Activated B cell treated with CpG ODN at 0.5 μM for 24 hours (primary cell): ENCODE measurements at regions of chr13 and their contacts with region 1.

Region 1: DNA sequence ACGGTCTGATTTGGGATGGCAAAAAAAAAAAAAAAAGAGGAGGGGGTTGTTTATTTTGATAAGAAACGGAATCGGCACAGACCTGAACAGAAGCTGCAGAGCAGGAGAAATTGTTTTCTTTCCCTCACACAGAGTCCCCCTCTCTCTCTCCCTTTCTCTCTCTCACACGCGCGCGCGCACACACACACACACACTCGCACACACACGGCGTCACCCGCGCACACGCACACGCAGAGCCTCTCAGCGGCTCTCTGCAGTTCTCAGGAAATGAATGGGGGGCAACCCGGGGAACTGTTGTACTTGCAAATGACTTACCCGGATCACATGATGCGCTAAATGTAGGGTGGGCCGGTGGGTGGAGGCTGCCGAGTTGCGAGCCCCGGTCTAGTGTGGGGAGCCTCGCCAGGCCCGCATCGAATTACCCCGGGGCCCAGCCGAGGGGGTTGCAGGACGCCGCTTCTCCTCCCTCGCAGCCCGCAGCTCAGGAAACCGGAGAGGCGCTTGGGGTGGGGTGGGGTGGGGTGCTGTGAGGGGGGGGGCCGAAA is 475 bp downstream of the KLF12 start:
- DNase-seq: peak; percentile 79
- ATAC-seq: peak; percentile 51
- H3K4me3 Mint-ChIP-seq: no peak overlapping the region
- H3K27ac Mint-ChIP-seq: peak overlapping the region; percentile 98
- H3K4me1 Mint-ChIP-seq: peaks cover 39% of the 10 kb centered on the region
- H3K27me3 Mint-ChIP-seq: no peaks in the 10 kb centered on the region
- CTCF ChIP-seq: no peak

Region 2: DNA sequence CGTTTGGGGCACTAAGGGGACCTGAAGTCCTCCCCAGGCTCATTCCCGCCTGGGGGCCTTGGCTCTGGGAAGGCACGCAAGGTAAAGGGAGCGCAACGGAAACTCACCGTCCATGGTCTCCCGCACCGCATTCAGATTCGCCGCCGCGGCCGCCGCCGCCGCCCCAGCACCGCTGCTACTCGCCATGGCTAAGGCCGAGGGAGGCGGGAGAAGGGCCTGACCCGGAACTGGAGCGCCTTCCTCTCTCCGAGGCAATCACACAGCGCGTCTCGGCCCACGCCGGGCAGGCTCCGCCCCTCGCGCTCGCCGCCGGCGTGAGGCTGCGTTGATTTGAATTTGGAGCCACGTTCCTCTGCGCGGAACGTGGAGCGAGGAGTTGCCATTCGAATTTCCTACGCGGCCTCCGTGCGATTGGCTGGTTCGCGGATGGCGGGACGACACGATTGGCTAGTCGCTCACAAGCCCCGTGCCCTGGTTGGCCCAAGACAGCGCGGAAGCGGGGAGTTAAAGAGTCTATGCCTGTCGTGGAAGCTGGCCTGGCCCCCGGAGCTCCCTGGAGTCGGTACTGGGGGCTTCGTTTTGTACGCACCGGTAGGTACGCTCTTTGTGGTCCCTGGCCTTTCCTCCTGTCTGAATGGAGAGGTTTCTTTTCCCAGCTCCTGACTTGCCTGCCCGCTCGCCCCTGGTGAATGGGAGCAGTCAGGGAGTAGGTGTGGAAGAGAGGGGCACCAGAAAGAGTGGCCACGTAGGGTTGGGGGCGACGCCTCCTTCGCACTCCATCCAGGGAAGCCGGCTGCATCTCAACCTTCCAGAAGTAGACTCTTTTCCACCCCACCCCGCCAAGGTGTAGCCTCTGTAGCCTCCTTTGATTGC is 1406.1 kb before region 1 on chr13 and contains the starts of genes BORA and MZT1:
- CTCF ChIA-PET with region 1: no interaction called
- POLR2A ChIA-PET with region 1: no interaction called
- intact Hi-C with region 1: loop called (anchors 2 kb)
- DNase-seq: peak; percentile 92
- ATAC-seq: peak; percentile 93
- H3K4me3 Mint-ChIP-seq: peak within 1 kb of the TSS; percentile 95
- H3K27ac Mint-ChIP-seq: peak within 1 kb of the TSS; percentile 84
- H3K4me1 Mint-ChIP-seq: peaks cover 48% of the 10 kb centered on the region
- H3K27me3 Mint-ChIP-seq: no peaks in the 10 kb centered on the region
- CTCF ChIP-seq: no peak
- total RNA-seq, gene BORA: 10.3 and 11.9 TPM in 2 replicates
- total RNA-seq, gene MZT1: 6.5 and 6.9 TPM in 2 replicates

Region 3: DNA sequence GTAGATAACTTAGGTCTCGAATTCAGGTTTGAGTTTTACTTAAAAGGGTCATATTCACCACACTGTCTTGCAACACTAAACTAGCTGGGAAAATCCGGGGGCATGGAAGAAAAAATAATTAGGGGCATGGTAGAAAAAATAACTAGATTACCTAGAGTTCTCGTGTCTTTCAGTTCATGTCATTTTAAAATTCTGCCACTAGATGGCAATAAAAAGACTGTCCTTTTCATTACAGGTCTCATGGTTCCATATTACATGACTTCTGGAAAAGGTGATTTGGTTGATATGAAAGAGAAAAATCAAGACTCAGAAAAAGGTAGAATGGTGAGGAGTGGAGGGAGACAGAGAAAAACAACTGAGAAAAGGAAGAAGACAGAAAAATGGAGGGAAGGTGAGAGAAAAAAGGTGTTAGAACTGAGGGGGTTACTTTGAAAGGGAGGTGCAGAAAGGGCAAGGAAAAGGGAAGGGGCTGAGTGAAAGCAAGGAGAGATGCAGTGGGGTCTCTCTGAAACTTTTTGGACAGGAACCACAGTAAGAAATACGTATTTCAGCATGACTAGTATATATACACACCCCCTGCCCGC is 298.5 kb before region 1 on chr13:
- CTCF ChIA-PET with region 1: interaction called, 4 read pairs
- POLR2A ChIA-PET with region 1: interaction called, 4 read pairs
- intact Hi-C with region 1: loop called (anchors 1 kb)
- DNase-seq: no peak
- ATAC-seq: peak; percentile 67
- H3K4me3 Mint-ChIP-seq: no peak overlapping the region
- H3K27ac Mint-ChIP-seq: no peak overlapping the region
- H3K4me1 Mint-ChIP-seq: peaks cover 9% of the 10 kb centered on the region
- H3K27me3 Mint-ChIP-seq: no peaks in the 10 kb centered on the region
- CTCF ChIP-seq: no peak

Region 4: DNA sequence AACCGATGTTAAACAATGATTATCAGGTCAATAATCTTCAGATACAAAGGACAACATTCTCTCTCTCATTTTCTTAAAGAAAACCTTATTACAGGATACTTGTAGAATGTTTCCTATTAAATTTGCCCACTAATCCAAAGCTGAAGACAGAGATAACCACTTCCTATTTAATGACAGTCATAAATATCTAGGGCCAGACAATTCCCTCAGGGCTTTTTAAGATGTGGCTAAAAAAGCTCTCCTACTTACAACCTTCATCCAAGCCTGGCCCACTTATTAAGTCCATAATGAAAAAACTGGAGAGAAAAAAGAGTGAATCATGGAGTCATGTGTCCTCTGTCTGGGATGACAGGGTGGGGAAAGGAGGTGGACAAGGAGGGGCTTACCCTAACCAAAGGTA is 235.5 kb before region 1 on chr13:
- CTCF ChIA-PET with region 1: no interaction called
- POLR2A ChIA-PET with region 1: no interaction called
- intact Hi-C with region 1: no loop called
- DNase-seq: no peak
- ATAC-seq: peak; percentile 34
- H3K4me3 Mint-ChIP-seq: no peak overlapping the region
- H3K27ac Mint-ChIP-seq: no peak overlapping the region
- H3K4me1 Mint-ChIP-seq: peaks cover 39% of the 10 kb centered on the region
- H3K27me3 Mint-ChIP-seq: no peaks in the 10 kb centered on the region
- CTCF ChIP-seq: no peak

Region 5: DNA sequence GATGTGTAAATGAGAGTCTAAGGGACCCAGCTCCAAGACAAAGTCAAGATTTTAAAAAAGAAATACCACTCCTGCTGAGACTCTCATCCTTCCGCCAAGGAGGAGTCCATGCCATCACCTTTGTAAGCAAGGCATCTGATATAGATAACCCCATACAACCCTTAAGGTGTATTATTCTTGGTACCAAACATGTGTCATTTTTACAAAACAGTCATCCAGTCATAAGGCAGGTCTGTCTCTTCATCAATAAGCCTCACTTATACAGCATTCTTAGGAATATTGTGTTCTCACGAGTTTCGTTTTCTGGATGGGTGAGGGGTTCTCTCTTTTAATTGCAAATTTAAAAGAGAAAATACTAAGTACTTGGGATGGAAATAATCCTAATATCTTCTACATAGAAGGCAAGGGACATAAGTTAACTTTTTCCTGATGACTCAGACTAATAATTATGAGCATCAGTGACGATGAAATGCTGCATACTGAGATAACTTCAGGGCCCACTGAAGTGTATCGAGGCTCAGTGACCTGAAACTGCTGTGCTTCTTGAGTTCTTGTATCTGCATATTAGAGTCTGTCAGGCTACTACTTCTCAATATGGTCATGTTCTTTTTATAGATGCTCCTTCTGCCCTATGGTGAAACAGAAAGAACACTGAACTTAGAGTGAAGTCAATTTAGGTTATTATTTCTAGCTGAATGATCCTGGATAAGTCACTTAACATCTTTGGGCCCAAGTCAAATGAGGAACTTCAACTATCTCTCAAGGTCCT is 166.1 kb before region 1 on chr13:
- CTCF ChIA-PET with region 1: no interaction called
- POLR2A ChIA-PET with region 1: interaction called, 54 read pairs
- intact Hi-C with region 1: loop called (anchors 1 kb)
- DNase-seq: no peak
- ATAC-seq: peak; percentile 93
- H3K4me3 Mint-ChIP-seq: peak overlapping the region; percentile 57
- H3K27ac Mint-ChIP-seq: peak overlapping the region; percentile 82
- H3K4me1 Mint-ChIP-seq: peaks cover 61% of the 10 kb centered on the region
- H3K27me3 Mint-ChIP-seq: no peaks in the 10 kb centered on the region
- CTCF ChIP-seq: no peak

Region 6: GRCh38 chr13:74090869-74091605 is 42.7 kb before region 1 on chr13:
- CTCF ChIA-PET with region 1: interaction called, 3 read pairs
- POLR2A ChIA-PET with region 1: interaction called, 6 read pairs
- intact Hi-C with region 1: loop called (anchors 5 kb)
- DNase-seq: no peak
- ATAC-seq: no peak
- H3K4me3 Mint-ChIP-seq: no peak overlapping the region
- H3K27ac Mint-ChIP-seq: peak overlapping the region; percentile 85
- H3K4me1 Mint-ChIP-seq: peaks cover 58% of the 10 kb centered on the region
- H3K27me3 Mint-ChIP-seq: no peaks in the 10 kb centered on the region
- CTCF ChIP-seq: no peak

Region 7: DNA sequence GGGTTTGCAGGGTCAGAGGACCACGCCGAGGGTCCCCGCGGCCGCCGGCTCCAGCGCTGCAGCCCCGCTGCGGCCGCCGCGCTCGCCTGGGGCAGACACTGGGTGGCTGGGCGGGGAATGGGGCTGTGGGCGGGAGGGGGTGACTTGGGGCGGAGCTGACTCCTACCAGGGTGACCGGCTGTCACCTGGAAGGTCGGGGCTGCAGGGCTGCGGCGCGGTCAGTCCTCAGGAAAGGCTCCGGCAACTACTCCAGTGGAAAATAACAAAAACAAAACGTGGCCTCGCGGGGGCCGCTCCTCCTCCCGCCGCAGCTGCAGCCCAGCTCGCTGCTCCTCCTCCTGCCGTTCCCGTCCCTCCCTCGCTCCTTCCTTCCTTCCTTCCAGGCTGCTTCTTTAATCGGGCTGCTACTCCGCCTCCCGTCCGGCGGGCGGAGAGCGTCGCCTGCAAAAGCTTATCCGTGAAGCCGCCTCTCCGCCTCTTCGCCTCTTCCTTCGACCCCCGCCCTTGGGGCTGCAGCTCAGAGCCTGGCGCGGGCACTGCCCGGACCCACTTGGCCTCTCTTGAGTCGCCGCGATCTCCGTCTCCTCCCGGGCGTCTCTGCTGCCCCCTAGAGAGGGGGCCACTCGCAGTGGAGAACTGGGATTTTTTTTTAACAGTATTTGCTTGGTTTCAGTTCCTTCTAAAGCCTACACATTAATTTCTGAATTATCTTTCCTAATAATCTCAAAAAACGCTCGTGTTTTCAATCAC is 1348.5 kb after region 1 on chr13 and contains the start of gene TBC1D4:
- CTCF ChIA-PET with region 1: no interaction called
- POLR2A ChIA-PET with region 1: no interaction called
- intact Hi-C with region 1: loop called (anchors 5 kb)
- DNase-seq: peak; percentile 63
- ATAC-seq: peak; percentile 86
- H3K4me3 Mint-ChIP-seq: peak within 1 kb of the TSS; percentile 98
- H3K27ac Mint-ChIP-seq: no peak within 1 kb of the TSS
- H3K4me1 Mint-ChIP-seq: peaks cover 15% of the 10 kb centered on the region
- H3K27me3 Mint-ChIP-seq: peaks cover 46% of the 10 kb centered on the region
- CTCF ChIP-seq: peak; percentile 39
- total RNA-seq, gene TBC1D4: 1.5 and 2.1 TPM in 2 replicates

Region 8: GRCh38 chr13:76086729-76087128 is 1953.0 kb after region 1 on chr13:
- CTCF ChIA-PET with region 1: no interaction called
- POLR2A ChIA-PET with region 1: no interaction called
- intact Hi-C with region 1: no loop called
- DNase-seq: no peak
- ATAC-seq: no peak
- H3K4me3 Mint-ChIP-seq: no peak overlapping the region
- H3K27ac Mint-ChIP-seq: no peak overlapping the region
- H3K4me1 Mint-ChIP-seq: no peaks in the 10 kb centered on the region
- H3K27me3 Mint-ChIP-seq: no peaks in the 10 kb centered on the region
- CTCF ChIP-seq: no peak